ENCODE measurements at regions of chr3 and their contacts with region 1.

Region 1: GRCh38 chr3:170307671-170308403 is 49.7 kb upstream of the SKIL start:
- DNase-seq: peak; percentile 32
- H3K4me3 Mint-ChIP-seq: no peak overlapping the region
- H3K27ac Mint-ChIP-seq: no peak overlapping the region
- H3K4me1 Mint-ChIP-seq: no peaks in the 10 kb centered on the region
- H3K27me3 Mint-ChIP-seq: no peaks in the 10 kb centered on the region
- CTCF ChIP-seq: no peak

Region 2: DNA sequence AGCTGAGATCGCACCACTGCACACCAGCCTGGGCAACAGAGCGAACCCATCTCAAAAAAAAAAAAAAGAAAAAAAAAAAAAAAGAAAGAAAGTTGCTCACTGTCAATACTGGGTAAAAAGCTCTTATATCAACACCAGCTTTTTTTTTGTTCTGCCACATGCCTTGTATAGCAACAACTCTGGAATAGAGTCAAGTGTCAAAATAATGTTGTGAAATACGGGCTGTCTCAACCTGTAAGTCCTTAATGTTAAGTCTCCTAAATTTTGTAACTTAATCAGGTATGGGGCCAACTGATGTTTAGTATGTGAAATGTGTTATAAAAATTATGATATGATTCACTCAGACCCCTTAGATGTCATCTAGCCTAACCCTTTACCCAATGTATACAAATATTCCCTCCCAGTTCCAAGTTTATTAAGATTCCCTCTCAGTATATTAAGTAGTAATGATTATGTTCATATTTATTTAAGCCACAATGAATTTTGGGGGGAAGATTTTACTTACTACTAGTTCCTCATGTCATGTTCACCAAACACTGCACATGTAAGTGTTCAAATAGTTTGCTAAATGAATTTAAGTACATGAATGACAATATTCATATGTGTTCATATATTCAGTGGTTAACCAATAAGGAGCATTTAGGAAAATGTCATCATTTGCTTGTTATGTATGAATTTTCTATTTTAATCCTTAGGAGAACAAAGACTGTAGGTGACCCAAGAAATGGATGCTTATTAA is 217.8 kb before region 1 on chr3:
- CTCF ChIA-PET with region 1: no interaction called
- POLR2A ChIA-PET with region 1: no interaction called
- intact Hi-C with region 1: no loop called
- DNase-seq: peak; percentile 31
- H3K4me3 Mint-ChIP-seq: no peak overlapping the region
- H3K27ac Mint-ChIP-seq: no peak overlapping the region
- H3K4me1 Mint-ChIP-seq: no peaks in the 10 kb centered on the region
- H3K27me3 Mint-ChIP-seq: no peaks in the 10 kb centered on the region
- CTCF ChIP-seq: no peak

Region 3: DNA sequence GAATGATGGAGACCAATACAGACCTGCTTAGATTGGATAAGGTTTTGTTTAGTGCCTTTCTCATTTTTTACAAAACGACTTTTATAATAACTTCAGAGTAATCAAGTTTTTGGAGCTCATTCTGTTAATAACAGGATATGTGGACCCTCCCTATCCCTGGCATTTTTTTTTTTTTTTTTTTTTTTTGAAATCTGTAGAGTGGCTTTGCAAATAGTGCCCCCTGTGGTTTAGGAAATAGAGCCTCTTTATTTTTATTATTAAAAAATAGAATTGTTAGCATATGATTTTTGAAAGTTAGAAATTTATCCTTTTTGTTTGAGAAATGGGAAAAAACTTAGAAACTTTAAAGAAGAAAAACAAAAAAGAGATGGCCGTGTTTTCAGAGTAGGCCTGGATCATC is 61.1 kb after region 1 on chr3:
- CTCF ChIA-PET with region 1: interaction called, 4 read pairs
- POLR2A ChIA-PET with region 1: no interaction called
- intact Hi-C with region 1: loop called (anchors 1 kb)
- DNase-seq: peak; percentile 10
- H3K4me3 Mint-ChIP-seq: no peak overlapping the region
- H3K27ac Mint-ChIP-seq: no peak overlapping the region
- H3K4me1 Mint-ChIP-seq: no peaks in the 10 kb centered on the region
- H3K27me3 Mint-ChIP-seq: no peaks in the 10 kb centered on the region
- CTCF ChIP-seq: peak; percentile 33

Measured in MCF 10A (cell line).